Cardiac septum (tissue), 1 donor: ENCODE measurements at regions of chr4 and their contacts with region 1.

Region 1: GRCh38 chr4:123986268-123986798 is 589.7 kb downstream of the SPRY1 start:
- DNase-seq: no peak

Region 2: GRCh38 chr4:124060261-124060918 is 74.1 kb after region 1 on chr4:
- intact Hi-C with region 1: loop called (anchors 2 kb)
- DNase-seq: peak; percentile 70